ENCODE measurements at regions of chr1 and their contacts with region 1.

Region 1: DNA sequence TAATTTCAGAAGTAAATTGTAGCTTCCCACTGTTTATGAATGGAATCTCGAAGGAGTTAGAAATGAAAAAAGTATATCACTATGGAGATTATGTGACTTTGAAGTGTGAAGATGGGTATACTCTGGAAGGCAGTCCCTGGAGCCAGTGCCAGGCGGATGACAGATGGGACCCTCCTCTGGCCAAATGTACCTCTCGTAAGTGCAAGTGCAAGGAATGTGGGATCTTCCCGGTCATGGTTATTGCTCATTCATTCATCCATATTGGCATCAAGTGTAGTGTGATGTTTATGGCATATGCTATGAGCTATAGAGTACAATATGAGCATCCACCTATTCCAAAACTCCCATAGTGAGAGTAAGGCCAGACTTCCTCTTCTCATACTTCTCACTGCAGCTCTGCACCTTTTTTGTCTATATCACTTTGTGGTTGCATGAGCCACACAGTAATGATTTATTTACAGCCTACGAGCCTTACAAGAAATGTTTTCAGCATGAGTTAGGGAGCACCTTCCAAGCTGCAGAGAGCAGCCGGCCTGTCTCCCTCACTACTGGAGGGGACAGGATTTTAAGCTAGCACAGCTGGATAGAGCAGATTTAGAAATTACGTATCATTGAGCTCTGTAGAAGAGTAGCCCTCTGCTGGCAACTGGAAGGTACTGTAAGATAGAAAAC is 24.9 kb upstream of the CR1L start:
- DNase-seq: peak; percentile 10
- H3K4me3 ChIP-seq: no peak overlapping the region
- H3K27ac ChIP-seq: no peak overlapping the region
- H3K27me3 ChIP-seq: no peaks in the 10 kb centered on the region
- CTCF ChIP-seq: peak; percentile 80

Region 2: GRCh38 chr1:207565546-207566358 is 54.3 kb before region 1 on chr1:
- CTCF ChIA-PET with region 1: no interaction called
- POLR2A ChIA-PET with region 1: no interaction called
- DNase-seq: no peak
- H3K4me3 ChIP-seq: no peak overlapping the region
- H3K27ac ChIP-seq: no peak overlapping the region
- H3K27me3 ChIP-seq: no peaks in the 10 kb centered on the region
- CTCF ChIP-seq: peak; percentile 24

Region 3: DNA sequence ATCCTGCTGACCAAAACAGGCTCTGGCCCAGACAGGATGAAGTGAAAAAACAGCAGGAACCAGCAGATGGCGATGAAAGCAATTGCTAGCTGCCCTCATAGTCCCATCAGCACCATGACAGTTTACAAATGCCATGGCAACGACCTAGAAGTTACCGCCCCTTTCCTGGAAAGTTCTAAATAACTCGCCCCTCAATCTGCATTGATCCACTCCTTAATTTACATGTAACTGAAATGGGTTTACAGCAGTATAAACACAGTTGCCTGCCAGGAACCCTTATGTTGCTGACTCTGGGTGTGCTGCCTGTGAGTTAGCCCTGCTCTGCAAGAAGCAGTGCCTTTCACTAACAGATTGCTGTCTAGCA is 40.6 kb before region 1 on chr1:
- CTCF ChIA-PET with region 1: interaction called, 10 read pairs
- POLR2A ChIA-PET with region 1: no interaction called
- DNase-seq: peak; percentile 8
- H3K4me3 ChIP-seq: no peak overlapping the region
- H3K27ac ChIP-seq: no peak overlapping the region
- H3K27me3 ChIP-seq: no peaks in the 10 kb centered on the region
- CTCF ChIP-seq: peak; percentile 58

Region 4: DNA sequence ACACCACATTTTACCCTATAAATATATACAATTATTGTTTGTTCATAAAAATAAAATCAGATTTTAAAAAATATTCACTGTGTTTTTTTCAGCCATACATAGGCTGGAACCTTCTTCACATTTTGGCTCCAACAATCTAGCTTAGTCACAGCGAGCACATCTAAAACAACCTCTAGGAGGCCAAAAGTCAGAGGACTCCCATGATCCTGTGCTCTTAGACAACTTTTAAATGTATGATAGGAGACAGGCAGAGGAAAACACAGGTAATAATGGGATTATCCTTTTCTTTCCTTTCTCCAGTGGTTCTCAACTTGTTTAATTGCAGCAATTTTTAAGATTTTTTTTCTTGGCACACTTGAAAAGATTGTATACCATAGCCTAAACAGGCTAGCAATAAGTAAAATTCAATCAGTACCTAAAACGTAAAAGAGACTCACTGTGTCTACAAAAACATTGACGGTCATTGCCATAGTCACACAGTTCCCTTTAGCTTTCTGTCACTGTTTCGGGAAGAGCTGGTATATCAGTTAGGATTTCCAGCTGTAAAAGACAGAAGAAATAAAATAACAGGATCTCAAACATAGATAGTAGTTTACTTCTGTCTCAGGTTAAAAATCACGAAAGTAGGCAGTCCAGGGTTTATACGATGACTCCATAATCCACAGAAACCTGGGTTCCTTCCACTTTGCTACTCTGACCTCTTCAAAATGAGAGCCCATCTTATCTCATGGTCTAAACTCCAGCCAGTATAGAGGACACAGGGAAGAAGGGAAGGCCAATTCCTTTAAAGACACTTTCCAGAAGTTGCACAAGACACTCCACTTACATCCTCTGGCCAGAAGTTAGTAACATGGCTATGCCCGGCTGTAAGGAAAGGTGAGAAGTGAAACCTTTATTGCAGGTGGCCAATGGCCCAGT is 14.3 kb before region 1 on chr1:
- CTCF ChIA-PET with region 1: interaction called, 14 read pairs
- POLR2A ChIA-PET with region 1: no interaction called
- DNase-seq: no peak
- H3K4me3 ChIP-seq: no peak overlapping the region
- H3K27ac ChIP-seq: no peak overlapping the region
- H3K27me3 ChIP-seq: no peaks in the 10 kb centered on the region
- CTCF ChIP-seq: no peak

Region 5: GRCh38 chr1:207644852-207645634 is 25.0 kb after region 1 on chr1 and contains the start of gene CR1L:
- CTCF ChIA-PET with region 1: interaction called, 10 read pairs
- POLR2A ChIA-PET with region 1: no interaction called
- DNase-seq: no peak
- H3K4me3 ChIP-seq: peak within 1 kb of the TSS; percentile 65
- H3K27ac ChIP-seq: no peak within 1 kb of the TSS
- H3K27me3 ChIP-seq: peaks cover 10% of the 10 kb centered on the region
- CTCF ChIP-seq: no peak
- polyA plus RNA-seq, gene CR1L: not detected in 2 replicates